Naive thymus-derived CD4-positive, alpha-beta T cell (primary cell): ENCODE measurements at regions of chr9 and their contacts with region 1.

Region 1: DNA sequence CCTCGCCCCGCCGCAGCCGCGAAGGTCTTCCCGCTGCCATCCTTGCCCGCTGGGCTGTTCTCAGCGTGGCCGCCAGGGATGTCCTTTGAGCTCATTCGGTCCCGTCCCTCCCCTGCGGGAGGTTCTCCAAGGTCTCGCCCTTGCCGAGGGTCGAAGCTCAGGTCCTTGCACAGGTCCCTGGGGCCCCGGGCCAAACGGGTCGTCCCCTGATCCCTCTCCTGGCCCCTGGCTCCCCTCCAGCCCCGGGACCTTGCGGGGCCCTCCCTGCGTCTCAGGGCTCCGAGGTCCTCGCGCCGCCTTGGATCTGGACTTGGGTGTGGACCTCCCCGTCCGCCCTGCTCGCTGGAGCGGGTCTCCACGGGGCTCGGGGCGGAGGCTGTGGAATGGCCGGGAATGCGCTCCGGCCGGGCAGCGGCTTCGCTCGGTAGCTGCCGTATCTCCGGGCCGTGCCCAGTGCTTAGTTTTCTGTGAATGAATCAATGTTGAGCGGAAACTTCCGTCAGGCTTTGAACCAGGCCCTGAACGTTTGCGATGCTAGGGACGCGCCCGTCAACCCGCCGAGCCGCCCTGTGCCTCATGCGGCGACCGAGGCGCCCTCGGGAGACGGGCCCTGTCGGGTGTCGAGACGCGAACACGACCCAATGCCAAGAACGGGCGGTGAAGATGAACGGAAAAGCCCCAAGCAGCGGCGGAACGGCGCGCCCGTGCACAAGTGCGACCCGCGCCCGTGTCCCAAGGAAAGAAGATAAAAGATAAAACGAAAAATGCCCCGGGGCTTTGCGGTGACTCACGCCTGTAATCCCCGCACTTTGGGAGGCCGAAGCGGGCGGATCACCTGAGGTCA is 789 bp downstream of the RNU6ATAC start:
- DNase-seq: peak; percentile 52 to 73 (median 71)
- ATAC-seq: no peak
- H3K4me3 ChIP-seq: no peak overlapping the region
- H3K4me3 Mint-ChIP-seq: no peak overlapping the region
- H3K27ac ChIP-seq: no peak overlapping the region
- H3K27ac Mint-ChIP-seq: peak overlapping the region in 1 of 9 donors; percentile 52
- H3K4me1 ChIP-seq: peaks cover 0 to 18% of the 10 kb centered on the region in 2 donors
- H3K4me1 Mint-ChIP-seq: peaks cover 0 to 28% (median 19%) of the 10 kb centered on the region in 7 donors
- H3K27me3 ChIP-seq: no peaks in the 10 kb centered on the region
- H3K27me3 Mint-ChIP-seq: no peaks in the 10 kb centered on the region

Region 2: GRCh38 chr9:133347985-133348717 is 815.4 kb before region 1 on chr9 and contains the starts of genes MED22 and RPL7A:
- CTCF ChIA-PET with region 1: no interaction called
- POLR2A ChIA-PET with region 1: no interaction called
- intact Hi-C with region 1: loop called in 1 of 2 experiments (anchors 10 kb)
- DNase-seq: peak; percentile 72 to 95 (median 92)
- ATAC-seq: peak; percentile 95
- H3K4me3 ChIP-seq: peak within 1 kb of the TSS; percentile 93
- H3K4me3 Mint-ChIP-seq: peak within 1 kb of the TSS; percentile 94 to 100 (median 98)
- H3K27ac ChIP-seq: peak within 1 kb of the TSS; percentile 98
- H3K27ac Mint-ChIP-seq: peak within 1 kb of the TSS; percentile 87 to 99 (median 97)
- H3K4me1 ChIP-seq: peaks cover 19 to 20% of the 10 kb centered on the region in 2 donors
- H3K4me1 Mint-ChIP-seq: peaks cover 23 to 46% (median 39%) of the 10 kb centered on the region in 7 donors
- H3K27me3 ChIP-seq: no peaks in the 10 kb centered on the region
- H3K27me3 Mint-ChIP-seq: peaks cover 0 to 2% (median 0%) of the 10 kb centered on the region in 5 donors
- total RNA-seq, gene MED22: 26.5 to 44.6 (median 32.8) TPM
- total RNA-seq, gene RPL7A: 2,002 to 2,815 (median 2,428) TPM

Region 3: DNA sequence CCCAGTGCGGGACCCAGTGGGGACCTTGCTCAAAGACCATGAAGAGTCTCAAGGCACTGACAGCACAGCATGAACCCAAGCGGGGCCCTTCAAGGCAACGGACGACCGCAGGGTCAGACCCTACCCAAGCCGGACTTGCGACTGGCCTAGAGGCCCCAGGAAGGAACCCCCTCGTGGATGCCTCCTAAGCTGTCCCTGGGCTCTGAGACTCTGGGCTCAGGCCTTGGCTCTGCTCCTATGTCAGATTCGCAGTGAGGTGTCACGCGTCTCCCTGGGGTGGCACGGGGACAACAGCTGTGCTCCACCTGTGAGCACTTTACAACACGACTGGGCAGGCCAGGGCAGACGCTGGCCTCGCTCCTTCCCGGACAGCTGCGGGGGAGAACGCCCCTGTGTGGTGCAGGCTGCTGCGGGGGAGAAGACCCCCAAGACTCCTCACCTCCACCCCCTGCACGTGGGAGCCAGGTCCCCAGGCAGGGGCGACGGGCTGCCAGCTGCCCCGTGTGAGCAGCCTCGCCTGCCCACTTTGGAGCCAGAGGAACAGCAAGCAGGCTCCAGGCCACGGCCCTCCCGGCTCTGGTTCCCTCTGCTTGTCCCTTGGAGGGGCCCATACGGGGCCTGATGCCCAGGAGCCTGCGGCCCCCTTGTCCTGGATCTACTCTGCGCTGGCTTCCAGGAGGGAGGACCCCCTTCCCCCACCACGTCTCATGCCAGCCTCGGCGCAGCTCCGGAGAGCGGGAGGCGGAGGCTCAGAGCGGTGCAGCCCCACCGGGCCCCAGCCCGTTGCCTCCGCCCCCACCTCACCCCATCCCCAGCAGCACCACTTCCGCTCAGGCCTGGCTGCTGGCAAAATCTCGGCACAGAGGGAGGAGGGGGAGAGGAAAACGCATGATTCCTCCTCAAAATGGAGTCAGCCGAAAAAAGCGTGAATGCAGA is 461.4 kb before region 1 on chr9:
- CTCF ChIA-PET with region 1: no interaction called
- POLR2A ChIA-PET with region 1: no interaction called
- intact Hi-C with region 1: loop called in 1 of 2 experiments (anchors 2 kb)
- DNase-seq: peak; percentile 46 to 85 (median 80)
- ATAC-seq: peak; percentile 85
- H3K4me3 ChIP-seq: peak overlapping the region; percentile 70
- H3K4me3 Mint-ChIP-seq: peak overlapping the region; percentile 79 to 93 (median 91)
- H3K27ac ChIP-seq: peak overlapping the region; percentile 91
- H3K27ac Mint-ChIP-seq: peak overlapping the region; percentile 83 to 100 (median 99)
- H3K4me1 ChIP-seq: peaks cover 31 to 62% of the 10 kb centered on the region in 2 donors
- H3K4me1 Mint-ChIP-seq: peaks cover 29 to 85% (median 66%) of the 10 kb centered on the region in 7 donors
- H3K27me3 ChIP-seq: no peaks in the 10 kb centered on the region
- H3K27me3 Mint-ChIP-seq: peaks cover 0 to 19% (median 0%) of the 10 kb centered on the region in 5 donors

Region 4: DNA sequence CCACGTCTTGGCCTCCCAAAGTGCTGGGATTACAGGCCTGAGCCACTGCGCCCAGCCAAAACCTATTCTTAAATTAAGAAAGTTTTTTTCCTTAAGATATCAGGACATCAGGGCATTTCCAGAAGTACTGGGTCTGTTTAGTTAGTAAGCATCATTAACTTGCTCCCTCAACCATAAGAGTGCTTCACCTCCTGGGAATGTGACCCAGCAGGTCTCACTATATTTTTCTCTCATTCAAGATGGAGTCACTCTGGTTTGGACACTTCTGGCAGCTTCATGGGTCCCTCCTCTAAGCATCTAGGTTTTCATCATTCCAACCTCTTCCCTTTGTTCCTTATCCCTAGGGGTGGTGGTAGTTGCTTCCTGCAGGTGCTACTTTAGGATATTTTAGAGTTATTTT is 148.6 kb before region 1 on chr9:
- CTCF ChIA-PET with region 1: no interaction called
- POLR2A ChIA-PET with region 1: no interaction called
- intact Hi-C with region 1: no loop called
- DNase-seq: no peak
- ATAC-seq: no peak
- H3K4me3 ChIP-seq: no peak overlapping the region
- H3K4me3 Mint-ChIP-seq: no peak overlapping the region
- H3K27ac ChIP-seq: no peak overlapping the region
- H3K27ac Mint-ChIP-seq: no peak overlapping the region
- H3K4me1 ChIP-seq: no peaks in the 10 kb centered on the region
- H3K4me1 Mint-ChIP-seq: peaks cover 0 to 2% (median 0%) of the 10 kb centered on the region in 7 donors
- H3K27me3 ChIP-seq: no peaks in the 10 kb centered on the region
- H3K27me3 Mint-ChIP-seq: peaks cover 0 to 3% (median 0%) of the 10 kb centered on the region in 5 donors

Region 5: DNA sequence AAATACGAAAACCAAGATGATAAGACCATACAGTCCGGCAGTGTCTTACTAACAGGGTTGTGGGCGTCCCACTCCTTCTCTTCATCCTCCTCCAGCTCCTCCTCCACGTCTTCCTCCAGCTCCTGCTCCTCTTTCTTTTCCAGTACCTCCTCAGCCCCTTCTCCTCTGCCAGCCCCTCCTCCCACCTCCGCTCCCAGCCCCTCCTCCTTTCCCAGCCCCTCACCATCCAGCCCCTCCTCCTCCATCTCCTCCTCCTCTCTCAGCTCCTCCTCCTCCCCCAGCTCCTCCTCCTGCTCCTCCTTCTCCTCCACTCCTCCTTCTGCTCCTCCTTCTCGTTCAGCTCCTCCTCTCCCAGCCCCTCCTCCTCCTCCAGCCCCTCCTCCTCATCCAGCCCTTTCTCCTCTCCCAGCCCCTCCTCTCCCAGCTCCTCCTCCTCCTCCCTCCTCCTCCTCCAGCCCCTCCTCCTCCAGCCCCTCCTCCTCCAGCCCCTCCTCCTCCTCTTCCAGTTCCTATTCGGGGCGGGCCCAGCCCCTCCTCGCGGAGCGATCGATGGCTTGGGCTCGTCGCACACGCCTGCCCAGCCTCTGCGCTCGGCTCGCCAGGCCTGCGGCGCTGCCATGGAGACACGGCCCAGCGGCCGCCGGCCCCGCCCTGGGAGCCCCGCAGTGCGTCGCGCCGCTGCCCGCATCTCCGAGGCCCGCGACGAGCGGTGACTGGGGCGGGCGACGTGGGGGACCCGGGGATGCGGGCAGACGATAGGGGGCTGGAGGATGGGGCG is 138.6 kb before region 1 on chr9 and contains the start of gene BRD3OS:
- CTCF ChIA-PET with region 1: no interaction called
- POLR2A ChIA-PET with region 1: interaction called, 7 read pairs
- intact Hi-C with region 1: loop called (anchors 1 kb)
- DNase-seq: peak; percentile 80 to 95 (median 91)
- ATAC-seq: peak; percentile 98
- H3K4me3 ChIP-seq: peak within 1 kb of the TSS; percentile 89
- H3K4me3 Mint-ChIP-seq: peak within 1 kb of the TSS; percentile 61 to 85 (median 80)
- H3K27ac ChIP-seq: peak within 1 kb of the TSS; percentile 75
- H3K27ac Mint-ChIP-seq: peak within 1 kb of the TSS; percentile 48 to 86 (median 78)
- H3K4me1 ChIP-seq: peaks cover 5 to 7% of the 10 kb centered on the region in 2 donors
- H3K4me1 Mint-ChIP-seq: peaks cover 0 to 21% (median 12%) of the 10 kb centered on the region in 7 donors
- H3K27me3 ChIP-seq: no peaks in the 10 kb centered on the region
- H3K27me3 Mint-ChIP-seq: no peaks in the 10 kb centered on the region
- total RNA-seq, gene BRD3OS: 8.3 to 19.3 (median 12.7) TPM

Region 6: GRCh38 chr9:134325817-134326723 is 162.5 kb after region 1 on chr9 and contains the start of gene RXRA:
- CTCF ChIA-PET with region 1: no interaction called
- POLR2A ChIA-PET with region 1: interaction called, 8 read pairs
- intact Hi-C with region 1: loop called in 1 of 2 experiments (anchors 2 kb)
- DNase-seq: peak; percentile 42 to 73 (median 61)
- ATAC-seq: peak; percentile 85
- H3K4me3 ChIP-seq: peak within 1 kb of the TSS; percentile 73
- H3K4me3 Mint-ChIP-seq: peak within 1 kb of the TSS; percentile 54 to 86 (median 75)
- H3K27ac ChIP-seq: peak within 1 kb of the TSS; percentile 62
- H3K27ac Mint-ChIP-seq: peak within 1 kb of the TSS in 5 of 9 donors; percentile 16 to 68 (median 47)
- H3K4me1 ChIP-seq: peaks cover 4 to 10% of the 10 kb centered on the region in 2 donors
- H3K4me1 Mint-ChIP-seq: peaks cover 0 to 17% (median 11%) of the 10 kb centered on the region in 7 donors
- H3K27me3 ChIP-seq: no peaks in the 10 kb centered on the region
- H3K27me3 Mint-ChIP-seq: peaks cover 0 to 52% (median 0%) of the 10 kb centered on the region in 5 donors
- total RNA-seq, gene RXRA: 5.9 to 59.5 (median 8.6) TPM

Region 7: DNA sequence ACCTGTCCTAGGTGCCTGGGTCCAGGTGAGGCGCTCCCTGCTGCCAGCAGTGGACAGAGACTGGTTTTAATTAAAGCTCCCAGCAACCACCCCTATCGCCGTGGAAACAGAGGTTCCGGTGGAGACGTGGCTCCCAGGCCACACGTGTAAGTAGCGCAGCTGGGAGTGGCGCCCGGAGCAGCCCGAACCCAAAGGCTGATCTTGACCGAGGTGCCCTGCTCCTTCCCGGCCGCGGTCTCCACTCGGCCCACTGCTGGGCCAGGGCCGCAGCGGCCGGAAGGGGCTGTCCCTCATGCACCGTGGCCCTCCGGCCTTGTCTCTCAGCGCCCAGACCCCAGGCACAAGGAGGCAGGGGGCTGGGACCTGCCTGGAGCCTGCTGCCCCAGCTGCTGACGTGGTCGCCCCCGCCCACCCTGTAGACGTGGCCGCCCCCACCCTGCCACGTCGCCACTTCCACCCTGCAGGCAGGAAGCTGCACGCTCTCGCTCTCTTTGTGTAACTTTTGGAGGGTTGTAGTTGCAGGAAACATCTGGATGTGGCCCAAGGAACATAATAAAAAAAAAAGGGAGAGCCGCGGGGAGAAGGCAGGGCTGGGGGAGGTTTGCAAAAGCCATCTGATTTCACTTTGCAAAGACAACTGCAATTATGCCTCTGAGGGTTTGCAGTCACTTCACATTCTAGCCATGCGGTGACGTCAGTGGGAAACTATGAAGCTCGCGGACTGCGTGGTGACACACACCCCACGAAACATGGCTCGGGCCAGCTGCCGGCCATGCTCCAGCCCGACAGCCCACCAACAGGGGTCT is 292.6 kb after region 1 on chr9:
- CTCF ChIA-PET with region 1: interaction called, 5 read pairs
- POLR2A ChIA-PET with region 1: interaction called, 26 read pairs
- intact Hi-C with region 1: loop called in 1 of 2 experiments (anchors 1 kb)
- DNase-seq: peak; percentile 57 to 87 (median 80)
- ATAC-seq: peak; percentile 91
- H3K4me3 ChIP-seq: peak overlapping the region; percentile 63
- H3K4me3 Mint-ChIP-seq: peak overlapping the region; percentile 66 to 96 (median 84)
- H3K27ac ChIP-seq: peak overlapping the region; percentile 84
- H3K27ac Mint-ChIP-seq: peak overlapping the region; percentile 79 to 99 (median 95)
- H3K4me1 ChIP-seq: peaks cover 10 to 20% of the 10 kb centered on the region in 2 donors
- H3K4me1 Mint-ChIP-seq: peaks cover 0 to 19% (median 11%) of the 10 kb centered on the region in 7 donors
- H3K27me3 ChIP-seq: no peaks in the 10 kb centered on the region
- H3K27me3 Mint-ChIP-seq: no peaks in the 10 kb centered on the region

Region 8: GRCh38 chr9:136118320-136119060 is 1954.9 kb after region 1 on chr9 and contains the start of gene TMEM250:
- CTCF ChIA-PET with region 1: no interaction called
- POLR2A ChIA-PET with region 1: no interaction called
- intact Hi-C with region 1: loop called in 1 of 2 experiments (anchors 10 kb)
- DNase-seq: peak; percentile 94 to 98 (median 97)
- ATAC-seq: peak; percentile 94
- H3K4me3 ChIP-seq: peak within 1 kb of the TSS; percentile 81
- H3K4me3 Mint-ChIP-seq: peak within 1 kb of the TSS; percentile 73 to 87 (median 84)
- H3K27ac ChIP-seq: peak within 1 kb of the TSS; percentile 87
- H3K27ac Mint-ChIP-seq: peak within 1 kb of the TSS; percentile 13 to 91 (median 84)
- H3K4me1 ChIP-seq: peaks cover 14 to 33% of the 10 kb centered on the region in 2 donors
- H3K4me1 Mint-ChIP-seq: peaks cover 3 to 26% (median 11%) of the 10 kb centered on the region in 7 donors
- H3K27me3 ChIP-seq: no peaks in the 10 kb centered on the region
- H3K27me3 Mint-ChIP-seq: no peaks in the 10 kb centered on the region
- total RNA-seq, gene TMEM250: 16.4 to 55.3 (median 41.3) TPM